GM12878 (cell line): ENCODE measurements at regions of chr11 and their contacts with region 1.

Region 1: DNA sequence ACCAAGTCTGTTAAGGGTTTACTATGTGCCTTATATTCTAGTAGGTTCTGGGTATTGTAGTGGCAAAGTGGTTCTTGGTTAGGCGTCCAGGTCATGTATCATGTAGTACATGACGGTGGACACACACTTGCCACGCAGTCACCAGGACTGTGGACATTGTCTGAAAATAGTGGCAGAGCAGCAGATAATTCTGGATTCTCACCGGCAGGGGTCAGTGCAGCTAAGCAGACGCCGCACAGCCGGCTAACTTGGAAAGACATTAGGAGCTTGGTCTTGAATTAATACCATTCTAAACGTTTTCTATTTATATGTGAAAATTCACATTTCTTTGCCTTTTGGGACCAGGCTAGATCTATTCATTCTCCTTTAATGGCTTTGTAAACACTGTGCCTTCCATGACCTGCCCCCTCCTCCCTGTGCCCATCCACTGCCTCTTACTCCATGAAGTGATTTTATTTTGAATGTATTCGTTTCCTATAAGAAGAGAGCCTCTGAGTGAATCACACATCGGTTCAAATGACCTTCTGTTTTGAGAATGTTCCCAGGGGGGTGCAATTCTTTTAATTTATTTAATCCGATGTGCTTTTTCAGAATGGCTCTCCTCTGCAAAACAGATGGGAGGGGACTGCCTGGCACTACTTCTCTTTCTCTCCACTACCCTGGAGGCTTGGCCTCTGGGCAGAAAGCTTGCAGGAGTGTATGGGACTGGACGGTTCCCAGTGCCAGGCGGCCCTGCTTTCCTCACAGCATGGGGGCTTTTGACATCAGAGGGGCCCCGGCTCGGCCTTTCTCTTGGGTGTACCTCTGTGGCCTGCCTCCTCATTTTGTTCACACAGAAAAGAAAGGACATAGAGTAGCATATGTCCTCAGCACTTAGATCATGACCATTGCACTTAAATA is 378.0 kb downstream of the NTM start:
- DNase-seq: no peak
- ATAC-seq: peak; percentile 92
- H3K4me3 ChIP-seq: no peak overlapping the region
- H3K27ac ChIP-seq: no peak overlapping the region
- H3K4me1 ChIP-seq: no peaks in the 10 kb centered on the region
- H3K27me3 ChIP-seq: no peaks in the 10 kb centered on the region; a peak in 3 of 4 replicates
- CTCF ChIP-seq: peak; percentile 77 to 79 (median 77)
- EP300 ChIP-seq: no peak
- POLR2A ChIP-seq: no peak
- RAD21 ChIP-seq: peak; percentile 63

Region 2: GRCh38 chr11:131717616-131718015 is 30.8 kb before region 1 on chr11:
- CTCF ChIA-PET with region 1: no interaction called
- POLR2A ChIA-PET with region 1: no interaction called
- RAD21 ChIA-PET with region 1: no interaction called
- SMC1A ChIA-PET with region 1: no interaction called
- in situ Hi-C with region 1: no loop called
- intact Hi-C with region 1: no loop called
- DNase-seq: no peak
- ATAC-seq: no peak
- H3K4me3 ChIP-seq: no peak overlapping the region
- H3K27ac ChIP-seq: no peak overlapping the region
- H3K4me1 ChIP-seq: no peaks in the 10 kb centered on the region
- H3K27me3 ChIP-seq: no peaks in the 10 kb centered on the region
- CTCF ChIP-seq: no peak
- EP300 ChIP-seq: no peak
- POLR2A ChIP-seq: no peak
- RAD21 ChIP-seq: no peak

Region 3: DNA sequence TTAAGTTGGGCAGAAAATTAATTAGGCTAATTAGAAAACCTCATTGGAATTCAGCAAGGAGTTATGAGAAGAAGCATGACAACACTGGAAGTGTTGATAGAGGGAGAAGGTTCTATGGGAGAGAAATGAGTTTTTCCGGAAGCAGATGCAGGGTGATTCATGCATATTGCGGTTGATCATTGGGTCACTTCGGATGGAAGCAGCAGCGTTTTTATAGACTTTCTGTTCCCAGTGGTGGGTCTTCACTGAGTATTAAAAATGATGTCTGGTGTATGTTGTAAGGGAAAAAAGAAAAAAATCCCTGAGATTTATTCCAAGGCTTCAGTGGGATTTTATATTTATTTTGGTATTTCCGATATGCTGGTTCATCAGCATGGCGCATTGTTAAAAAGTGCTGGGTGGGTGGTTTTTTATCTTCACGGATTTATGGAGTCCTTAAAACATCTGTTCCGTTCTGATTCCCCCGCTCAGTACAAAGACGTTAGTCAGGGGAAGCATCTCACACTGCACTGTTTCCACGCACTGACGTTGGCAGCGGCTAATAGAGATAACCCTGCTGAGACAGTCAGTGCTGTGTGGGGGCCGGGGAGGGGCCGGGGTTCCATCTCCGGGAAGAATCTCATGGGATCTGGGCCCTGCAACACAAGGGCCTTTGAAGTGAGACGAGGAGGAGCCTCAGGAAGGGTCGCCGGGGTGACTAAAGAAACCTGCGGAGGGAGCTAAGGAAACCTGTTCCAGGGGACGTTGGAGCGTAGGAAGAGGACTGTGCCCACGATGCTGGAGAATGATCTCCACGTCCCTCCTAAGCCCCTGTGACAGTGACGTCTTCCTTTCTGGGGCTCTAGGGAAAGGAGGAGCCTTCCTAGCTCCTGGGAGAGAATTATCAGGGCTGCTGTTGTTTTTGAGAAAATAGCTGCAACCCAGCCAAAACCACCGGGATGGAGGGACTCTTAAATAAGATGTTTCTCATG is 12.0 kb after region 1 on chr11:
- CTCF ChIA-PET with region 1: interaction called, 19 read pairs
- POLR2A ChIA-PET with region 1: no interaction called
- RAD21 ChIA-PET with region 1: interaction called, 3 read pairs
- SMC1A ChIA-PET with region 1: interaction called, 5 read pairs
- in situ Hi-C with region 1: no loop called
- intact Hi-C with region 1: no loop called
- DNase-seq: no peak
- ATAC-seq: no peak
- H3K4me3 ChIP-seq: no peak overlapping the region
- H3K27ac ChIP-seq: no peak overlapping the region
- H3K4me1 ChIP-seq: no peaks in the 10 kb centered on the region
- H3K27me3 ChIP-seq: no peaks in the 10 kb centered on the region
- CTCF ChIP-seq: no peak
- EP300 ChIP-seq: no peak
- POLR2A ChIP-seq: no peak
- RAD21 ChIP-seq: no peak